Dendritic cell treated with granulocyte-macrophage colony-stimulating factor and Interleukin-4, amounts not matched to agents 40 ng/mL and 50 ng/mL, for 4 days (primary cell): ENCODE measurements at regions of chr18 and their contacts with region 1.

Region 1: DNA sequence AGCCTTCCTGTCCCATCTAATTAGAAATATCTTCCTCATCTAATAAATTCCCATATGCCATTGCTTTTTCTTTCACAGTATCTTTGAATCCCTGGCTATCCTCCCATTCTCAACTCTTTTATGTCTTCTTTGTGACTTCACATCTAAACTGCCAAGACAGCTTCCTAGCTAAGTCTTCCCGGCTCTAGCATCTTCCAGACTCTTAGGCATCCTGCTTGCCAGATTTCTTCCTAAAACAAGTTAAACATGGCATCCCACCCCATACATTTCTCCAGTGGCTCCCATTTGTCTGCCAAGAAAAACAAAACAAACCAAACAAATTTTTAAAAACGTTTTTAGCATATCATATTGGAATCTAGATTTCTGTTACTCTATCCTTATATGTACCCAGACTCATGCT is 751.9 kb downstream of the MBD2 start:
- H3K4me3 Mint-ChIP-seq: no peak overlapping the region
- H3K27ac Mint-ChIP-seq: no peak overlapping the region
- H3K4me1 Mint-ChIP-seq: no peaks in the 10 kb centered on the region
- H3K27me3 Mint-ChIP-seq: no peaks in the 10 kb centered on the region

Region 2: GRCh38 chr18:53417003-53417402 is 55.5 kb before region 1 on chr18:
- intact Hi-C with region 1: loop called (anchors 10 kb)
- H3K4me3 Mint-ChIP-seq: no peak overlapping the region
- H3K27ac Mint-ChIP-seq: no peak overlapping the region
- H3K4me1 Mint-ChIP-seq: no peaks in the 10 kb centered on the region
- H3K27me3 Mint-ChIP-seq: no peaks in the 10 kb centered on the region

Region 3: DNA sequence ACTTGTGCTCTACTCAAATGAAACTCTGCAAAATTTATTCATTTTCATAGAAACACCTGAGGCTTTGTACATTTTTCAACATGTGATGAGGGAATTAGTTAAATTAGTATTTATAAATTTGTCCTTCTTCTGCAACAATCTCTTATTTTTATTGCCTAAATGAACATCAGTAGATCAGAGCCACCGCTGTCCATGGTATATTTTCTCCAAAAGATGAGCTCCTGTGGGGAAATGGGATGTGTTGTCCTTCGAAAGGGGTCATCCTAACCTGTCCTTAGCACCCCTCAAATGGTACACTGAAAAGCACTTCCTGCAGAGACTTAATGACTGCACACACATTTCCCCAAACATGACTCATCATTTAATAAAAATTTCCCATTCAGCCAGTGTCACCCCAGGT is 37.3 kb after region 1 on chr18:
- intact Hi-C with region 1: no loop called
- H3K4me3 Mint-ChIP-seq: no peak overlapping the region
- H3K27ac Mint-ChIP-seq: no peak overlapping the region
- H3K4me1 Mint-ChIP-seq: no peaks in the 10 kb centered on the region
- H3K27me3 Mint-ChIP-seq: no peaks in the 10 kb centered on the region

Region 4: DNA sequence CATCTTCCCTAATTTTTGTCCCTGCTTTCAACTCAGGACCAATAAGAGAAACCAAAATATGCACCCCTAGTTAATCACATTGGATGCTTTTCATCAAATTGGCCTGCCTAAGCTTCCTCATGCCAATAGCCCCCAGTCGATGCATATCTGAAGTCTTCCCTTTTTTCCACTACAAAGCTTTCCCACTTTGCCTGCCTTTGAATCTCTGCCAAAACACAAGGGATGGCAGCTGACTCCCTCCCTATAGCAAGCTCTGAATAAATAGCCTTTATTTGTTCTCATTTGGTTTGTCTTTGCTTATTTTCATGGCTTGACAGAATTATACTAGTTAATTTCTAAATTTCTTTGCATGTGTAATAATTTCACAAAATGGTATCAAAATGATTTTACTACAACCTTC is 130.7 kb after region 1 on chr18:
- intact Hi-C with region 1: no loop called
- H3K4me3 Mint-ChIP-seq: no peak overlapping the region
- H3K27ac Mint-ChIP-seq: no peak overlapping the region
- H3K4me1 Mint-ChIP-seq: no peaks in the 10 kb centered on the region
- H3K27me3 Mint-ChIP-seq: no peaks in the 10 kb centered on the region

Region 5: GRCh38 chr18:54316071-54316820 is 843.7 kb after region 1 on chr18:
- intact Hi-C with region 1: loop called (anchors 10 kb)
- H3K4me3 Mint-ChIP-seq: no peak overlapping the region
- H3K27ac Mint-ChIP-seq: no peak overlapping the region
- H3K4me1 Mint-ChIP-seq: no peaks in the 10 kb centered on the region
- H3K27me3 Mint-ChIP-seq: peaks cover 2% of the 10 kb centered on the region